A673 (cell line): ENCODE measurements at regions of chr7 and their contacts with region 1.

Region 1: DNA sequence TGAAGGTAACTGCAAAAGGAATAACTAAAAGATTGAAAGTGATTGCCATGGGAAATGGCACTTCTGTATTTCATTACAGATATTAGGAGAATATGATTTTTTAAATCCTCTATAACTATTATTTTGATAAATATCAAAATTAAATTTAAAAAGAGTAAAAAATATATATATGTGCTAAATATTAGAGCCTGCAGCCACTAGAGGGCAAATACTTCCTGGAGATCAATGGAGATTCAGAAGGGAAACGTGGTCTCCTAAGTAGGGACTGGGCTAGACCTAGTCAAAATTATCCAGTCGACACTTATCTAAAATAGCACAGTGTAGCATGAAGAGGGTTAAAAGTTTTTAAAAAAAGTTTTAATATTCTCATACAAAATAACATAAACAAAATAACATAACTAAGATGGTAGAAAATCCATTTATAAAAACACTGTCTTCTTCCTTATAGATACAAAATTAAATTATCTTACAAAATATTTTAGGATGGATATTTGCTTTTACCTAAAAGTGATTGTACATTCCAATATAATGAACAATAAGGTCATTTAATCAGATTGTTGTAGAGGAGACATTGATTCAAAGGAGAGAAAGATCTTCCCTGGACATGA is 434.3 kb downstream of the MDFIC start:
- DNase-seq: peak; percentile 54
- H3K4me3 ChIP-seq: no peak overlapping the region
- H3K27ac ChIP-seq: no peak overlapping the region
- H3K4me1 ChIP-seq: no peaks in the 10 kb centered on the region
- H3K27me3 ChIP-seq: no peaks in the 10 kb centered on the region
- CTCF ChIP-seq: peak; percentile 64

Region 2: DNA sequence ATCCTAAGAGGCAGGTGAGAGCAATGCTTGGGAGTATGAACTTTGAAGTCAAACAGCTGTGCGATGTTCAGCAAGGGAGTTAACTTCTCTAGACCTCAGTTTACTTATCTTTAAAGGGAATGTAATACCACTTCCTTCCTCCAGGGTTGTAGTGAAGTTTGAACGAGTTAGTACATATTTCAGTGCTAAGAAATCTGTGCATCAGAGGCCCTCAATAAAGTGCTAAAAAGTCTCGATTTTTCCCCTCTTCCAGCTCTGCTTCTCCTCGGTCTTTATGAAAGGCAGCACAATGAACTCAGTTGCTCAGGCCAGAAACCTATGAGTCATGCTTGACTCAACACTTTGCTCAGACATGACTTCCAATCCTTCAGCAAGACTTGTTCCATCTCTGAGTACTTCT is 15.4 kb before region 1 on chr7:
- CTCF ChIA-PET with region 1: no interaction called
- POLR2A ChIA-PET with region 1: no interaction called
- intact Hi-C with region 1: no loop called
- DNase-seq: peak; percentile 29
- H3K4me3 ChIP-seq: no peak overlapping the region
- H3K27ac ChIP-seq: no peak overlapping the region
- H3K4me1 ChIP-seq: no peaks in the 10 kb centered on the region
- H3K27me3 ChIP-seq: no peaks in the 10 kb centered on the region
- CTCF ChIP-seq: peak; percentile 38

Region 3: GRCh38 chr7:115387137-115387536 is 30.9 kb after region 1 on chr7:
- CTCF ChIA-PET with region 1: interaction called, 10 read pairs
- POLR2A ChIA-PET with region 1: no interaction called
- intact Hi-C with region 1: no loop called
- DNase-seq: no peak
- H3K4me3 ChIP-seq: no peak overlapping the region
- H3K27ac ChIP-seq: no peak overlapping the region
- H3K4me1 ChIP-seq: no peaks in the 10 kb centered on the region
- H3K27me3 ChIP-seq: no peaks in the 10 kb centered on the region
- CTCF ChIP-seq: peak; percentile 12; the same call in 1 of the 2 replicates

Region 4: DNA sequence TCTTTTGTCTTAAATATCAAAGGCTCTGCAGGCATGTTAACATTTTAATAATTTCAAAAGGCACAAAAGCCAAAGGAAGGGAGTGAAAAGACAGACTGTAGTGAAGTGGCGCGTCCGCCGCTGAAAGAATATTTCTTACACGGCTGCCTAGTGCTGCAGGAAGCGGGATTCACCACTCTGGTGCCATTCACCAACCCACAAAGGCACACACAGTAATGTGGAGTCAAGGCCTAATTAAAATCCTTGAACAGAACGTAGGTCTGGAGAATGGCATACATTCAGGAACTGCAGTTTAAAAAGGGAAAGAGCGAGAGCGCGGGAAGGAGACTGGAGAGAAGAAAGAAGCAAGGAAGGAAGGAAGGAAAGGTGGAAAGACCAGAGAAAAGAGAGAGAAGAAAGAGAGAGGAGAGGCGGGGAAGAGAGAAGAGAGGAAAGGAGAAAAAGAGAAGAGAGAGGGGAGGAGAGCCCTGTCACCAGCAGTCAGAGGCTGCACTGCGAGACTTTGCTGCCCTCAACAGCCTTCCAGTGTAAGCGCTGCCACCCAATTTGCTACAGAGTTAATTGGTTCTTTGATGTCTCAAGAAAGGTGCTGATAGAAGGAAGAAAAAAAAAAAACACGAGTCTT is 119.6 kb after region 1 on chr7:
- CTCF ChIA-PET with region 1: no interaction called
- POLR2A ChIA-PET with region 1: no interaction called
- intact Hi-C with region 1: loop called (anchors 10 kb)
- DNase-seq: peak; percentile 42
- H3K4me3 ChIP-seq: no peak overlapping the region
- H3K27ac ChIP-seq: no peak overlapping the region
- H3K4me1 ChIP-seq: no peaks in the 10 kb centered on the region
- H3K27me3 ChIP-seq: no peaks in the 10 kb centered on the region
- CTCF ChIP-seq: peak; percentile 43

Region 5: GRCh38 chr7:115910541-115911164 is 554.4 kb after region 1 on chr7:
- CTCF ChIA-PET with region 1: no interaction called
- POLR2A ChIA-PET with region 1: no interaction called
- intact Hi-C with region 1: loop called (anchors 5 kb)
- DNase-seq: peak; percentile 71
- H3K4me3 ChIP-seq: no peak overlapping the region
- H3K27ac ChIP-seq: no peak overlapping the region
- H3K4me1 ChIP-seq: no peaks in the 10 kb centered on the region
- H3K27me3 ChIP-seq: peaks cover 68% of the 10 kb centered on the region
- CTCF ChIP-seq: peak; percentile 75